Activated T-helper 2 cell treated with anti-CD3 and anti-CD28 coated beads, Interferon-gamma antibody, Interleukin-2, Interleukin-4, amounts not matched to agents 10 μg/mL and 5 μg/mL and 100 μg/mL, durations not matched to agents 14 hours and 24 hours and 36 hours (primary cell): ENCODE measurements at regions of chr9 and their contacts with region 1.

Region 1: DNA sequence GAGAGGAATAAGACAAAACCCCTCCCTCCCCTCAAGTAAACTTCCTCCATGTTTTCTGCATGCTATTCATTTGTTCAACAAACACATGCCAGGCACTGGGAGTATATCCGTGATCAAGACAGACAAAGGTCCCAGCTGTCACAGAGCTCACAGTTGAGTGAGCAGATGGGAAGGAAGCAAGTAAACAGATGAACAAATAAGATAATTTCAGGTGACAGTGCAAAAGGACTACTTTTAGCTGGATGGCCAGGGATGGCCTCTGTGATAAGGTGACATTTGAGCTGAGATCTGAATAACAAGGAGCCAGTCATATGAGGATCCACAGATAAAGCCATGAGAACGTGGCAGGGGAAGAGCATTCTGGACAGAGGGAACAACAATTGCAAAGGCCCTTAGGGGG is 121.8 kb upstream of the RAD23B start:
- DNase-seq: no peak
- H3K4me3 Mint-ChIP-seq: no peak overlapping the region
- H3K27ac Mint-ChIP-seq: no peak overlapping the region
- H3K4me1 Mint-ChIP-seq: no peaks in the 10 kb centered on the region
- H3K27me3 Mint-ChIP-seq: peaks cover 6% of the 10 kb centered on the region

Region 2: GRCh38 chr9:106820866-106821265 is 340.5 kb before region 1 on chr9:
- intact Hi-C with region 1: loop called (anchors 5 kb)
- DNase-seq: no peak
- H3K4me3 Mint-ChIP-seq: no peak overlapping the region
- H3K27ac Mint-ChIP-seq: no peak overlapping the region
- H3K4me1 Mint-ChIP-seq: no peaks in the 10 kb centered on the region
- H3K27me3 Mint-ChIP-seq: no peaks in the 10 kb centered on the region